AG04450 (cell line): ENCODE measurements at regions of chr2 and their contacts with region 1.

Region 1: DNA sequence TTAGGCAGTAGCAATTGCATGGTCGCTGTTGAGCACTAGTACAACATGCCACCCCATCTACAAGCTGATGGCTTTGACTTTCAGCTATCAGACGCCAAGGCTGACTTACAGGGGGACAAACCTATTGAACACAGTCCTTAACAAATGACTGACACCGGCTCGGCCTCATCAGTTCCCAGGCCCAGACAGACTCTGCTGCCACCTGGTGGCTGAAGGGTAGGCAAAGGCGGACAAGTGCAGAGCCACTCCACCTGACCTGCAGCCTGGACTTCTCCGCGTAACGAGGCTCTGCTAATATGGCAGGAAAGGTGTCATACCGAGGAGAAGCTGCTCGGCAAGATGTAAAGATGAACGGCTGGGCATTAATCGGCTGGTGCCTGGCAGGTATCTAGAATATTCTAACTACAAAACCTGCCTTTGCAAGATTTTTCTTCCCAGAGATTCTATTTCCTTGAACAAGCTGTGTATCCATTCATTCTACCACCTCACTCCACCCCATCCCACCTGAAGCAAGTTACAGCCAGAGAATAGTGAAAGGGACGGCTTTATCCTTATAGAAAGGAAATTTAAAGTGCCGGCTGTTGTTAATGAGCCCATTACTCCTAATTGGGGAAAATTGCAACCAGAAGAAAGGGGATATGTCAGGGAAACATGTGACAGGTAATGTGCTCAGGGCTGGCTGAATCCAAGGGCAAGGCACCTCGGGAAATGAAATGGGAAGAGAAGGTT is 67.4 kb downstream of the STEAP3 start:
- DNase-seq: no peak
- H3K4me3 ChIP-seq: no peak overlapping the region
- H3K27ac ChIP-seq: no peak overlapping the region
- H3K27me3 ChIP-seq: no peaks in the 10 kb centered on the region
- CTCF ChIP-seq: peak; percentile 89

Region 2: GRCh38 chr2:118882709-118883210 is 408.3 kb before region 1 on chr2:
- CTCF ChIA-PET with region 1: interaction called, 22 read pairs
- POLR2A ChIA-PET with region 1: no interaction called
- DNase-seq: no peak
- H3K4me3 ChIP-seq: no peak overlapping the region
- H3K27ac ChIP-seq: no peak overlapping the region
- H3K27me3 ChIP-seq: no peaks in the 10 kb centered on the region
- CTCF ChIP-seq: peak; percentile 87

Region 3: DNA sequence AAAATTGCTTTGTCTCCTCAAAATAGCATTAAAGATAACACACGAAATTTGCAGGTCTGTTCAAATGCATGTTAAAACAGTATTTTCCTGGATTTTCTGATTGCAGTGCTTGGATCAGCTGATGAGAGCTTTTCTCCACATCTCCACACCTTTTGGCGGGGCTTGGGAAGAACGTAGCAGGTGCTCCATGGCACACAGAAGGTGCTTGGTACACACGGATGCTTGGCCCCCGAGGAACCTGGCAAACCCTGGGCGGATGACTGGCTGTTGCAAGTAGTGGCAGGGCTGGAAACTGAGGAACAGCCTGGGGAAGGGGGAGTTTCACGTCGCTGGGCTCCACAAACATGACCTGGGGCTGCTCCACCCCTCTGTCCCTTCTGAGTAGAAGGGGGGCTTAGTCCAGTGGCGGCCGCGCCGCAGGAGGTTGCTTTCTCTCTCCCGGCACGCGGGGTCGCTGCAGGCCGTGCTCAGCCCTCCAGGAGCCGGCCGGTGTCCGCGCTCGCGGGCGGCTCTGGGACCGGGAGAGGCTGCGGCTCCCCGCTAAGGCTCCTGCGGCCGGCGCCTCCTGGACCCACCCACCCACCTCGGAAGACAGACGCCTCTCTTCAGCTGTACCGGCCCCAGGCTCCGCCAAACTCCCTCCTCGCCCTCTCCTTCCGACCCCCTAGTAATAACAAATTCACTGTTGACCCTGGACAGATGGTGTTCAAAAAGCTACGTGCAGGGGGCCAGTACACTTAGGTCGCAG is 279.7 kb before region 1 on chr2:
- CTCF ChIA-PET with region 1: interaction called, 29 read pairs
- POLR2A ChIA-PET with region 1: no interaction called
- DNase-seq: no peak
- H3K4me3 ChIP-seq: no peak overlapping the region
- H3K27ac ChIP-seq: no peak overlapping the region
- H3K27me3 ChIP-seq: peaks cover 4% of the 10 kb centered on the region
- CTCF ChIP-seq: peak; percentile 53

Region 4: GRCh38 chr2:119028327-119029174 is 262.5 kb before region 1 on chr2:
- CTCF ChIA-PET with region 1: interaction called, 22 read pairs
- POLR2A ChIA-PET with region 1: no interaction called
- DNase-seq: peak; percentile 7
- H3K4me3 ChIP-seq: no peak overlapping the region
- H3K27ac ChIP-seq: no peak overlapping the region
- H3K27me3 ChIP-seq: peaks cover 2% of the 10 kb centered on the region
- CTCF ChIP-seq: peak; percentile 66

Region 5: DNA sequence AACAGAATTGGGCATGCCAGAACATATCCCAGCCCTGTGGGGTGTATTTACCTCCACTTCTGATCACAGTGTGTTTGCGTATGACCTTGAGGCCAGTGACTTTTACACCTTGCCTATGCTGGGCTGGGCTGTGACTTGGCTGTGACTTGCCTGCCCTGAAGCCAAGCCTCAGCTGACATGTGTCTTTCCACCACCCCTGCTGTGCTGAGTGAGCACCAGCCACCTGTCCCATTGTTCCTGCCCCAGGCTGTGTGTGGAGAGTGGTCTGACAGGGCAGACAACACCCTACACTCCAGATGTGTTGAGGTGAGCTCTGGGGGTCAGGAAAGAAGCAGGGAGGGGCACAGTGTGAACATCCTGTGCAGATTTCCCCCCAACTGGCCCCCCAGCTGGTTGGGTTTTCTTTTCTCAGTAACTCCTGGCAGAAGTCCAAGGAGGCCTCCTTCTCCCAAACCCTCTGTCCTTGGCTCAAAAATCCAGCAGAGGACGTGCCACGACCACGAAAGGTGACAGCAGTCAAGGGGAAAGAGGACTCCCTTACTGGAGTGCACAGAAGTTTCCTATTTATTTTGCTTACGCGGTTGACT is 72.5 kb before region 1 on chr2:
- CTCF ChIA-PET with region 1: interaction called, 41 read pairs
- POLR2A ChIA-PET with region 1: no interaction called
- DNase-seq: peak; percentile 48
- H3K4me3 ChIP-seq: no peak overlapping the region
- H3K27ac ChIP-seq: no peak overlapping the region
- H3K27me3 ChIP-seq: peaks cover 4% of the 10 kb centered on the region
- CTCF ChIP-seq: peak; percentile 62

Region 6: GRCh38 chr2:119252847-119253702 is 37.9 kb before region 1 on chr2:
- CTCF ChIA-PET with region 1: no interaction called
- POLR2A ChIA-PET with region 1: no interaction called
- DNase-seq: peak; percentile 76
- H3K4me3 ChIP-seq: no peak overlapping the region
- H3K27ac ChIP-seq: peak overlapping the region; percentile 94
- H3K27me3 ChIP-seq: no peaks in the 10 kb centered on the region
- CTCF ChIP-seq: no peak

Region 7: DNA sequence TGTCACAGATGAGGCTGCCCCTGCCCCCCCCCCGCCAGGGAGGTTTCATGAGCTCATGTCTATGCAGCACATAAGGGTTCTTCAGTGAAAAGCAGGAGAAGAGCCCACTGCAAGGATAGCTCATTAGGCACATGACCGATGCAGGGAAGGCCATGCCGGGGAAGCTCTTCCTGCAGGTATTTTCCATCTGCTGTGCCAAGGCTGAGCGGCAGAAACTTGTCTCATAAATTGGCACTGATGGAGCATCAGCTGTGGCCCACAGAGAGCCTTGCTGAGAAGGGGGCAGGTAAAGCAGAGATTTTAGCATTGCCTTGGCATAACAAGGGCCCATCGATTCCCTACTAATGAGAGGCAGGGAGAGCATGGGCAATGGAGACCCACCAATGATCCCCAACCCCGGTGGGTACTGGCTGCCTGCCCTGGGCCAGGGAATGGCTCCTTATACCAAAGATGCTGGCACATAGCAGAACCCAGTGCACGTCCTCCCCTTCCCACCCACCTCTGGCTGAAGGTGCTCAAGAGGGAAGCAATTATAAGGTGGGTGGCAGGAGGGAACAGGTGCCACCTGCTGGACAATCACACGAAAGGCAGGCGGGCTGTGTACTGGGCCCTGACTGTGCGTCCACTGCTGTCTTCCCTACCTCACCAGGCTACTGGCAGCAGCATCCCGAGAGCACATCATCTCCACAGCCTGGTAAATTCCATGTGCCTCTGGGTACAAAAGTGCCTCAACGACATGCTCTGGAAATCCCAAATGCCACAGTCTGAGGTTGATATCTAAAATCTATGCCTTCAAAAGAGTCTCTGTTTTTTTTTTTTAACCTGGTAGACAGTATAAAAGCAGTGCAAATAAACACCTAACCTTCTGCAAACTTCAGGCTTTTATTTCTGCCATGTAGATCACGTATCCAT is 26.0 kb before region 1 on chr2:
- CTCF ChIA-PET with region 1: interaction called, 28 read pairs
- POLR2A ChIA-PET with region 1: no interaction called
- DNase-seq: no peak
- H3K4me3 ChIP-seq: no peak overlapping the region
- H3K27ac ChIP-seq: no peak overlapping the region
- H3K27me3 ChIP-seq: no peaks in the 10 kb centered on the region
- CTCF ChIP-seq: peak; percentile 88

Region 8: GRCh38 chr2:119301413-119301812 is 10.4 kb after region 1 on chr2:
- CTCF ChIA-PET with region 1: interaction called, 24 read pairs
- POLR2A ChIA-PET with region 1: no interaction called
- DNase-seq: no peak
- H3K4me3 ChIP-seq: no peak overlapping the region
- H3K27ac ChIP-seq: no peak overlapping the region
- H3K27me3 ChIP-seq: no peaks in the 10 kb centered on the region
- CTCF ChIP-seq: no peak

Region 9: DNA sequence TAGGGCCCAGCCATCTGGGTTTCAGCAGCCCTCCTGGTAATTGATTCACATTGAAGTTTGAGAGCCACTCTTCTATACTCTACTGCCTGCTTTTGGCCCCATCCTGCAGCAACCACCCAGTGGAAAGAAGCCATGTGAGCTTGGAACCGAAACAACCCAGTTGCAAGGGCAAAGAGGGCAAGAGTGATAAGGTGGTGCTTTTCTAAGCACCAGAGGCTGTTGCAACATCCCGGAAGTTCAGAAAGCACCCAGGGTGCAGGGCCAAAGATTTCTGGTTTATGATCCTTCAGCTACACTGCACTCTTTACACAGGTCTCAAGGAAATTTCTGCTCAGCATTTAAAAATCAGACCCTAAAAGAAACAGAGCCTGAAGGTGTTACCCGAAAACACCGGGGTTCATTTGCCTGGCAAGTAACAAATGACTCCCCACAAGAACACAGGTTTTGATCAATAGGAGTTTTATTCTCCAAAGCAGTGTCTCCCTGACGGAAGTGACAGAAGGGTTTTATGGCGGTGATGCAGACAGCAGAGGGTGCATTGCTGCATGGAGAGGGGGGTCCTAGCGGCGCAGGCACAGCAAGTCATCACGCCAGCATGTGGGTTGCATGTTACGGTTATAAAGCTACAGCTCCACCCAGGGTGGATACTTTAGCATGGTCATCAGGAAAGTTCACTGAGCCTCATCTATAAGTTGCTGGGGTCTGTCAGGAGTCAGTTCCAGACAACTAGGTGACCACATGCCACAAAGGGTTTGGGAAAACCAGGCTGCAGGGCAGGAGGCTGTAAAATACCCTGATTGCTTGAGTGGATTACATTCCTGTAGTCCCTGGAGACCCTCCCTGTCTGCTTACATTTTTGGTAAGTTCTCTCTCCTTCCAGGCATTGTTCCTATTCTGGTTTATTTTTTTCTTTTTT is 111.9 kb after region 1 on chr2:
- CTCF ChIA-PET with region 1: no interaction called
- POLR2A ChIA-PET with region 1: no interaction called
- DNase-seq: no peak
- H3K4me3 ChIP-seq: no peak overlapping the region
- H3K27ac ChIP-seq: no peak overlapping the region
- H3K27me3 ChIP-seq: peaks cover 2% of the 10 kb centered on the region
- CTCF ChIP-seq: no peak

Region 10: DNA sequence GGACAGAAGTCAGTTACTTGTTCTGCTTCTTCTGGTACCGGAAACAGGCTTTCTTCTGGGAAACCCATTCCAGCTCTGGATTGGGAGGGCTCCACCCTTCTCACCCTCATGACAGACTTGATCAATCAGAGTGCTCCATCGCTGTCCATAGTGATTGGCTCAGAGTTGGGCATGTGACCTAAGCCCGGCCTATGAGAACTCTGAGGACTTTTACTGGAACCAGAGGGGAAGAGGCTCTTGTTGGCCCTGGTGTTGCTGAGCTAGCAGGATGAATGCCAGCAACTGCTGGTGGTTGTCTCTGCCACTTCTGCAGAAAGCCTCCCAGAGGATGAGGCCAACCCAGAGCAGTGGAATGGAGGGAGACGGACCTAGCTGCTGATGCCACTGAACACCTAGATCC is 174.0 kb after region 1 on chr2:
- CTCF ChIA-PET with region 1: no interaction called
- POLR2A ChIA-PET with region 1: no interaction called
- DNase-seq: no peak
- H3K4me3 ChIP-seq: no peak overlapping the region
- H3K27ac ChIP-seq: no peak overlapping the region
- H3K27me3 ChIP-seq: peaks cover 2% of the 10 kb centered on the region
- CTCF ChIP-seq: no peak